Heart left ventricle (tissue), 16 donors: ENCODE measurements at regions of chr2 and their contacts with region 1.

Region 1: DNA sequence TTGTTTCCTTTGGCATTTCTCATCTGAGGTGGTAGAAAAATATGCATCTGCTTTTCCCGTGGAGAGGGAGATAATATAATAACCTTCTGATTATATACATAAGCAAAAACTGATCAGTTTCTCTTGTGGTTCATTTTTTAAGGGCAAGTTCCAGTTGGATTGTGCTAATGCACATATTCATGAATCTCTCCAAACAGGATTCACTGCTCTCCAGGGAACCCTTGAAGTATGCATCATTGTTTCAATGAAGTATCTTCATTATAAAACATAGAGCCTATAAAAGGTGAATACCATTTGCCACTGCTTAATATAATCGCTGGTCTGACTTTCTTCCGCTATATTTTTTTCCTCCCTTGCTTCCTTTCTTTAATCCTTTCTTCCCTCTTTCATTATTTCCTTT is 384.7 kb downstream of the FIGN start:
- DNase-seq: no peak
- ATAC-seq: no peak
- H3K4me3 ChIP-seq: no peak overlapping the region
- H3K27ac ChIP-seq: no peak overlapping the region
- H3K4me1 ChIP-seq: peaks cover 0 to 17% (median 6%) of the 10 kb centered on the region in 12 donors
- H3K27me3 ChIP-seq: no peaks in the 10 kb centered on the region
- CTCF ChIP-seq: no peak
- POLR2A ChIP-seq: no peak

Region 2: DNA sequence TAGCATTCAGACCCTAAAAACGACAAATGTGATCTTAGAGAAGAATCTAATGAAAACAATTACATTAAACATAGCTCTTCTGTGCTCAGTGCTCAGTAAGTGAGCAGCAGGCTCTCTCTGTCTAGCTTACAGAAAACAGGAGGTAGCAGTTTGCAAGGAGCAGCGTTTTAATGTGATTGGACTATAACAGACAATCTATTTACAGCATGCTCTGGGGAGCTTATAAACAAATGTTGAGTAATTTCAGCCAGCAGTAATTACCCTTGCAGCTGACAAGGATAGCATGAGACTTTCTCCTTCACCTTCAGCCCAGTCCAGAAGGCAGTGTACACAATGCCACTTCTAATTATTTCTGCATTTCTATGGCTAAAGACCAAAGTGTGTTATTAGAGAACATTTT is 114.3 kb after region 1 on chr2:
- intact Hi-C with region 1: loop called in 3 of 10 experiments (anchors 2 to 10 kb)
- DNase-seq: no peak
- ATAC-seq: peak in 3 of 4 donors; percentile 62 to 72 (median 67)
- H3K4me3 ChIP-seq: no peak overlapping the region
- H3K27ac ChIP-seq: no peak overlapping the region
- H3K4me1 ChIP-seq: peaks cover 0 to 25% (median 2%) of the 10 kb centered on the region in 12 donors
- H3K27me3 ChIP-seq: no peaks in the 10 kb centered on the region
- CTCF ChIP-seq: no peak
- POLR2A ChIP-seq: no peak